Activated CD4-positive, alpha-beta T cell treated with anti-CD3 and anti-CD28 coated beads for 36 hours (primary cell): ENCODE measurements at regions of chr6 and their contacts with region 1.

Region 1: DNA sequence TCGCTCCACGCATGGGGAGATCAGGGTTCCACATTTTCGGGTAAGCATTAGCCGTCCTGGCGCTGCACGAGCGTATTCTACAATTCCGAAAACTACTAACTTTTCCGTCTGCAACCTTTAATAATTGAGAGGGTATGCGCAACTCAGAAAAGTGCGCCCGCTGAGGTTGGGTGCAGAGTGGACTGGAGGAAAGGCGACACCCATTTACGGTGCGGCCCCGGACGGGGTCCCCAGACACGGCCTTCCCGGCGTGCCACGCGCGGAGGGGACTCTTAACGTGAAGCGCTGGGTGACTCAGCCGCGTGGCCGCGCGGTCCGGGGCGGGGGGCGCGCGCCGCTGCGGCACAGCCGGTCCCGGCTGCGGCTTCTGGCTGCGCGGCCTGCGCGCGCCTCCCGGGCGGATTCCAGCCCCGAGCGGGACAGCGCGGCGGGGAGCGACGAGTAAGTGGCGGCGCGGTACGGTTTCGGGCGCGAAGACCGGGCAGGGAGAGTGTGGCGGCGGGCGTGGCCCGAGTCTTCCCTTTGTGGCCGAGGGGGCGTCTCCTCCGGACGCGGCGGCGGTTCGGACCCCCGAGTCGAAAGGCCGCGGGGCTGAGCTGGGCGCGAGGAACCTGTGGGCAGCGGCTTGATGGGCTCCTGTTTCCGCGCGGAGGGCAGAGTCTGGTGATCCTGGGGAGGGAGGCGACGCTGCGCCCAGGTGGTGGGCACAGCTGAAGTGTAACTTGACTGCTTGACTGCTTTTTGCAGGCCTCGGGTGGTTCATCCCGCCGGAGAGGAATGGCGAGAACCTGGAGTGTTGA is at the starts of genes KCTD20 and PXT1:
- DNase-seq: peak; percentile 94
- ATAC-seq: peak; percentile 78
- H3K4me3 Mint-ChIP-seq: peak within 1 kb of the TSS; percentile 95
- H3K27ac Mint-ChIP-seq: peak within 1 kb of the TSS; percentile 97
- H3K4me1 Mint-ChIP-seq: peaks cover 27% of the 10 kb centered on the region
- H3K27me3 Mint-ChIP-seq: no peaks in the 10 kb centered on the region
- total RNA-seq, gene KCTD20: 46.5 to 50.6 TPM
- total RNA-seq, gene PXT1: 0.11 to 0.14 TPM

Region 2: DNA sequence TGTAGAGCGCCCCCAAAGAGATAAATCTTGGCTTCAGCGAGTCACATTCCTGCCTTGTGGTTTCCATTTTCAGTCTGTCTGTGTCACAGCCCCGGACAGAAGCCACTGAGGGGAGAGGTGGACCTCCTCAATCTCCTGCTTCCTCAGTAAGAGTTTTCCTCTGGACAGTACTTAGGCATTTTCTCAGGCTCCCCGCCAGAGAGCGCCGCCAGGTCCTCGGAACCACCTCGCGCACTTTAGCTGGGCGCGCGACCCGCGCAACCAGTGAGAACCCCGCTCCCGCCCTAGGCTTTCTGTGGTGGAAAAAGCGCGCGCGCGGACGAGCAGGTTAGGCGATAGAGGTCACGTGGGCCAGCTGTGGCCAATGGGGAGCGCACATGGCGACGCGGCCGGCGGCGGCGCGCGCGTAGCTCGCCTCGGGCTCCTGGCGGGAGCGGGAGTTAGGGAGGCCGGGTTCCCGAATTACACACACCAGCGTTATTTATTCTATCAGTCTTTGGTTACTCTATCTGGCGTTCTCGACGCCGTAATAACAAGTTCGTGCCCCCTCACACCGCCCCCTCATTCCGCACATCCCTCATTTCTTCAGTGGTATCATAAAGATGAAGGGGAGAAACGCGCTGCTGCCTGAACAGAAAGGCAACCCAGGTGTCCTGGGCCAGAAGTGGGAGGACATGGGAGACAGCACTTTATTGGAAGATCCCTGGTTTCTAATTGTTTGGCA is 19.6 kb before region 1 on chr6:
- CTCF ChIA-PET with region 1: interaction called, 9 read pairs
- POLR2A ChIA-PET with region 1: no interaction called
- intact Hi-C with region 1: loop called (anchors 1 kb)
- DNase-seq: peak; percentile 99
- ATAC-seq: peak; percentile 97
- H3K4me3 Mint-ChIP-seq: peak overlapping the region; percentile 83
- H3K27ac Mint-ChIP-seq: peak overlapping the region; percentile 92
- H3K4me1 Mint-ChIP-seq: peaks cover 17% of the 10 kb centered on the region
- H3K27me3 Mint-ChIP-seq: no peaks in the 10 kb centered on the region